Adrenal gland (tissue), 19 donors: ENCODE measurements at regions of chr16 and their contacts with region 1.

Region 1: DNA sequence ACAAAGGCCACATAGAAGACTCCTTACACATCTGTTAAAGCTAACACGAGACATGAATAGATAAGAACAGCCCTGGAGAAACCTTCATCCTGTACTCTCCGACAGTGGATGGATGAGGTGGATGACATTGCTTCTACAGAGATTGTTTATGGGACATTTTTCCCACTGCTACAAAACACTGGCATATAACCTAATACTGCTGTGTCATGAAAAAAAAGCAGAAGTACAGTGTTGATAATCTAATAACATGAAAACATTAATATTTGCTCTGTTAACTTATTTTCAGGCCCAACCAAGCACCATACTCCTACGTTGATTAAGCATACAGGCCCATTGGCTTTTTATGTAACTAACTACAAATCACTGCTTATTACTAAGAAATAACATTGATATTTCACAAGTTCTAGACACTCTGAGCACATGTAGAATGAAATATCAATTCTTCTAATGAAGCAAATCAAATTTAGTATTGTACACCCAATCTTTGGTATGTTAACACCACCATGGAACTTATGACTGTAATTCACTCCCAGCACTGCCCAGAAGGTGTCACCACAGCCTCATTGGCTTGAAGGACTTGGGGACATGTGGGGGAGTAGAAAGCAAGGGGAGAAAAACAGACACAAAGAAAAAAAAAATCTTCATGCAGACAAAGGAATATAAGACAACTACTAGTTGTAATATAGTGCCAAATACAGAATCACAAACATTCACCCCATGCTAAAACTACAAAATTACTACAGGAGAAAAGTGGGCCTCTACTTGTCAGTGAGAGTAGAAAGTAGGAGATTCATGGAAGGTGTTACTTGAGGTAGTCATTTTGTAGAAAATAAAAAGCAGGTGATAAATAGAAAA is 330.0 kb upstream of the PMFBP1 start:
- DNase-seq: peak; percentile 53 to 80 (median 58)
- H3K4me3 ChIP-seq: no peak overlapping the region
- H3K27ac ChIP-seq: no peak overlapping the region
- H3K4me1 ChIP-seq: no peaks in the 10 kb centered on the region
- H3K27me3 ChIP-seq: no peaks in the 10 kb centered on the region
- CTCF ChIP-seq: peak; percentile 55 to 85 (median 78)
- POLR2A ChIP-seq: no peak

Region 2: DNA sequence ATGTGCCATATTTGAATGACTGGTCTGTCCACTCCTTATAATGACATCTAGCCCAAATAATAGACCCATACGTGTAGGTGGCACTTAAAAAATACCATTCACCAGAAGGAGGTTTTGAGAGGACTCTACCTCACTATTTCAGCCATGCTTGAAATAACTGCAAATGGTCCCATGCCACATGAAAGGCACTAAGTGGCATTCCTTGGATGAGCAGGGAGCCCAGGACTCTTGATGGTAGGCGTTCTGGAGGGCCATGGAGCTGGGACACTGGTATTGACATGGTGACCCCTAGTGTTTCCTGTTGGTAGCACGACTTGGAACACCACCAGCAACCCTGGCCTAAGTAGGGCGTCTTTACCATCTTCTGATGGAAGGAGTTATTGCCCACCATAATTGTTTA is 694.7 kb after region 1 on chr16:
- intact Hi-C with region 1: loop called in 1 of 2 experiments (anchors 10 kb)
- DNase-seq: peak; percentile 73 to 91 (median 83)
- H3K4me3 ChIP-seq: no peak overlapping the region
- H3K27ac ChIP-seq: no peak overlapping the region
- H3K4me1 ChIP-seq: no peaks in the 10 kb centered on the region
- H3K27me3 ChIP-seq: no peaks in the 10 kb centered on the region
- CTCF ChIP-seq: peak; percentile 52 to 82 (median 68)
- POLR2A ChIP-seq: no peak